Prostate gland (tissue), 2 donors: ENCODE measurements at regions of chr6 and their contacts with region 1.

Region 1: GRCh38 chr6:41683510-41684310 is 45.4 kb downstream of the MDFI start:
- DNase-seq: peak; percentile 80
- H3K4me3 ChIP-seq: peak overlapping the region in 1 of 2 donors; percentile 18
- H3K27ac ChIP-seq: peak overlapping the region; percentile 17 to 56
- H3K4me1 ChIP-seq: peaks cover 4% of the 10 kb centered on the region
- H3K27me3 ChIP-seq: no peaks in the 10 kb centered on the region
- CTCF ChIP-seq: peak; percentile 91 to 95 (median 93)
- POLR2A ChIP-seq: no peak

Region 2: GRCh38 chr6:41367700-41368099 is 316.0 kb before region 1 on chr6:
- intact Hi-C with region 1: loop called (anchors 1 kb)
- DNase-seq: peak; percentile 34
- H3K4me3 ChIP-seq: no peak overlapping the region
- H3K27ac ChIP-seq: no peak overlapping the region
- H3K4me1 ChIP-seq: peaks cover under 1% of the 10 kb centered on the region
- H3K27me3 ChIP-seq: no peaks in the 10 kb centered on the region
- CTCF ChIP-seq: peak in 3 of 4 experiments; percentile 48 to 68 (median 65)
- POLR2A ChIP-seq: no peak

Region 3: DNA sequence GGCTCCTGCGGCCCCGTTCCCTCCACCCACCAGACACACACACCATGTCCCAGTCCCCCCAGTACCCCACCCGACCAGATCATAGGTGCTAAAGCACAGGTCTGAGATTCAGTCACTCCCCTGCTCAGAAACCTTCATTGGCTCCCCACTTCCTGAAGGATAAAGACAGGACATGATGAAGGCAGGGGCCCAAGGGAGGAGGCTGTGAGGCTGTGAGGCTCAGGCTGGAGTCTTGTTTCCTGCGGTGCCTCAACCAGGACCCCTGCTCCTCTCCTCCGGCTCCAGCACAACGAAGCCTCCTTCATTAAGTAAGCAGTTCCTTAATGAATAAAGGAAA is 267.2 kb before region 1 on chr6:
- intact Hi-C with region 1: loop called (anchors 5 kb)
- DNase-seq: no peak
- H3K4me3 ChIP-seq: no peak overlapping the region
- H3K27ac ChIP-seq: no peak overlapping the region
- H3K4me1 ChIP-seq: no peaks in the 10 kb centered on the region
- H3K27me3 ChIP-seq: no peaks in the 10 kb centered on the region
- CTCF ChIP-seq: no peak
- POLR2A ChIP-seq: no peak

Region 4: DNA sequence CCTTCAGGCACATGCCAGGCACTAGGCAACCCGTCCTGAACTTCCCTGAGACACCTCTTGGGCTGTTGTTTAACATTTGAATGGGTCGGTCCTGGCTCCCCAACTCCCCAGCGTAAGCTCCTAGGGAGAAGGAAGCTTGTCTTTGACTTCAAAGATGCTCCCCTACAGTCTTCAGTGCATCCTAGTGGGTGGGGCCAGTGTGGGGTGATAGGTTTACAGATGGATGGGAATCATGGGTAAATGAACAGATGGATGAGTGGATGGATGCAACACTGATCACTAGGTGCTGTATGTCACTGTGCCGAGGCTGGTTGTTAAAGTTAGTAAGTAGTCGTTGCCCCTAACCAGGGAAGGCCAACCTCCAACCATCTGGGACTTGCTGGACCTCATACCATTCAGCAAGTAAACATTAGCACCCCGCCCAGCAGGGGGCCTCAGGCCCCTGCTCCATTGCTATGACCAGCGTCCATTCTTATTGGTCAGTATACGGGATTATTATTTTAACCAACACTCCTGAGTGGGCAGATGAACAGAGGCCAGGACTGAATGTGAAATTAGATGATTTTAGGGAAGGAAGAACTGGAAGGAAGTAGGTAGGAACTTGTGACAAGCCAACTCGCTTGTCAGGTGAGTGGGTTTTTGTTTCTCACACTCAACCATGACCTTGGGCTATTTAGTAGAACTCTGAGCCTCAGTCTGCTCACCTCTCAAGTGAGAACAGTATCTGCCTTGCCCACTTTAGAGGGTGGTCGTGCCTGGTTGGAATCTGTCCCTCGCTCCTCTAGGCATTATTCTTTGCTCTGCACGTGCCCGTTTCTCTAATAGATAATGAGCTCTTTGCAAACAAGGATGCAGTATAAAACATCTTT is 220.4 kb before region 1 on chr6:
- intact Hi-C with region 1: loop called (anchors 10 kb)
- DNase-seq: peak; percentile 63
- H3K4me3 ChIP-seq: no peak overlapping the region
- H3K27ac ChIP-seq: no peak overlapping the region
- H3K4me1 ChIP-seq: no peaks in the 10 kb centered on the region
- H3K27me3 ChIP-seq: no peaks in the 10 kb centered on the region
- CTCF ChIP-seq: peak; percentile 32 to 82 (median 78)
- POLR2A ChIP-seq: no peak

Region 5: GRCh38 chr6:41602864-41603608 is 80.7 kb before region 1 on chr6:
- intact Hi-C with region 1: loop called (anchors 1 kb)
- DNase-seq: peak; percentile 76
- H3K4me3 ChIP-seq: no peak overlapping the region
- H3K27ac ChIP-seq: peak overlapping the region; percentile 31 to 64
- H3K4me1 ChIP-seq: no peaks in the 10 kb centered on the region
- H3K27me3 ChIP-seq: no peaks in the 10 kb centered on the region
- CTCF ChIP-seq: peak; percentile 76 to 92 (median 85)
- POLR2A ChIP-seq: no peak